PC-9 (cell line): ENCODE measurements at regions of chr7 and their contacts with region 1.

Region 1: DNA sequence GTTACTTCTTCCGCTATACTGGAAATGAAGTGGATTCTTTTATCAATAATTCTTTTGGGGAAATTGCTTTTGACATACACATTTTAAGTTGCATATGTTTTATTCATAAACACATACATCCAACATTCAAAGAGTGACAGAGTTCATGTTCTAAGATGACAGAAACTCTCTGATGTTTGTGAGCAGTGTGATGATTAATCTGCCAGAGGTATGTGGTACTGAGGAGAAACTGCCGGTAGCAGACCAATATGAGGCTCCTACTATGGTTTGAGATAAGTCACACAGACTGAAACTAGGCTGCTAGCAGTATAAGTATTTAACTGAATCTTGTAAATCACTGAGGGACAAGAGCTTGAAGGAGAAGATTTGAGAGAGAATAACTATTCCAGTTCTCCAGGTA is 524.1 kb upstream of the SEMA3D start:
- DNase-seq: no peak
- H3K4me3 ChIP-seq: no peak overlapping the region
- H3K27ac ChIP-seq: no peak overlapping the region
- H3K4me1 ChIP-seq: no peaks in the 10 kb centered on the region
- H3K27me3 ChIP-seq: no peaks in the 10 kb centered on the region
- CTCF ChIP-seq: no peak

Region 2: DNA sequence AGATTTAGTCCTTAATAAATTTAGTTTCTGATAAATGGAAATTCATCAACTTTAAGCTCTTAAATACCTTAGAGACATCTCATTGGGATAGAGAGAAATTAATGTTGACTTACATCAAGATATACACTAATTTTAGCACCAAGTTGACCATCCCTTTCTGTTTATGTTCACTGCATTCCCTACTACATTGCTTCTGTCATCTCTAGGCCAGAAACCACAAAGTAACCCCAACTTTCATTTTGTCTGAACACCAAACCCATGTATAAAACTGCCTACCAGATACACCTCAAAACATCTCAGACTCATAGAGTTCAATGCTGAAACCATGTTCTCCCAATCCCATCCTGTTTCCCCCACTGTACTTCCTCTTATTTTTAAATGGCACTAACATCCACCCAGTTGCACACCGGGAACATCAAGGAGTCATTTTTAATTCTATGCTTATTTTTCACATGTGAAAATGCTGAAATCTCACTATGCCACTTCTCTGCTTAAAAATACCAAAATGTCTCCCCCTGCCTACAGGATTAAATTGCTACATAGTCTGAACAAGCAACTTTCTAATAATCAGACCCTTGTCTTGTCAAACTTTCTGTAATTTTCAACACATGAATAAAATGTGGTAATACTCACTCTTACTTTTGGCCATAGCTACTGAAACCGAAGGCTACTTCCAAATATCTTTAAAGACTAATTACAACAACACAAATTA is 725.7 kb before region 1 on chr7:
- CTCF ChIA-PET with region 1: interaction called, 13 read pairs
- POLR2A ChIA-PET with region 1: no interaction called
- intact Hi-C with region 1: no loop called
- DNase-seq: no peak
- H3K4me3 ChIP-seq: no peak overlapping the region
- H3K27ac ChIP-seq: no peak overlapping the region
- H3K4me1 ChIP-seq: no peaks in the 10 kb centered on the region
- H3K27me3 ChIP-seq: no peaks in the 10 kb centered on the region
- CTCF ChIP-seq: no peak

Region 3: GRCh38 chr7:85464042-85464651 is 246.8 kb before region 1 on chr7:
- CTCF ChIA-PET with region 1: no interaction called
- POLR2A ChIA-PET with region 1: no interaction called
- intact Hi-C with region 1: no loop called
- DNase-seq: no peak
- H3K4me3 ChIP-seq: no peak overlapping the region
- H3K27ac ChIP-seq: no peak overlapping the region
- H3K4me1 ChIP-seq: no peaks in the 10 kb centered on the region
- H3K27me3 ChIP-seq: no peaks in the 10 kb centered on the region
- CTCF ChIP-seq: peak; percentile 47; the same call in 1 of the 2 replicates